Activated CD4-positive, alpha-beta memory T cell treated with anti-CD3 and anti-CD28 coated beads for 36 hours (primary cell): ENCODE measurements at regions of chr5 and their contacts with region 1.

Region 1: DNA sequence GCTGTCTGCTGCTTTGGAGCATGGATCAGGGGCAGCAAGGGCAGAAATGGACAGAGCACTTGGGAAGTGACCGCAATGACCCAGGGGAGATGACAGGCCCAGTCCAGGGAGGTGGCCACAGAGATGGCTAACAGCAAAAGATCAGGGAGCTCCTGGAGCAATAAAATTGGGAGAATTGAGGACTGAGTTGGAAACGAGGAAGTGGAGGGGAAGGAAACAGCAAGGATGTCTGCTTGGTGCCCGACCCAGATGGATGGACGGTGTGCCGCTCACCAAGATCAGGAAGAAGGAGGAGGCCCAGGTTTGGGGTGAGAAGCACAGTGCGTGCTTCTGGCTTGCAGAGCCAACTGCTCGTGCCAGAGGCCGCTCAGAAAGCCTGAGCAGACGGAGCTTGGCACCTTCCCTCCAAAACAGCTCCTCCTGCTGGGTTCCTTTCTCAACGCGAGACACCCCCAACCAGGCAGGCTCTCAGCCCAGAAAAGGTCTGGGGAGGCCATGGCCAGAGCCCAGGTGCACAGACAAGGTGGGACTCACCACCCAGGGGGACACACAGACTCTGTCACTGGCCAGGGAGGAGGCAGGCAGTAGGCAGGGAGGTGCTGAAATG is 1.7 kb upstream of the SLC34A1 start:
- DNase-seq: peak; percentile 41
- H3K4me3 Mint-ChIP-seq: no peak overlapping the region
- H3K27ac Mint-ChIP-seq: no peak overlapping the region
- H3K4me1 Mint-ChIP-seq: peaks cover 23% of the 10 kb centered on the region
- H3K27me3 Mint-ChIP-seq: no peaks in the 10 kb centered on the region

Region 2: DNA sequence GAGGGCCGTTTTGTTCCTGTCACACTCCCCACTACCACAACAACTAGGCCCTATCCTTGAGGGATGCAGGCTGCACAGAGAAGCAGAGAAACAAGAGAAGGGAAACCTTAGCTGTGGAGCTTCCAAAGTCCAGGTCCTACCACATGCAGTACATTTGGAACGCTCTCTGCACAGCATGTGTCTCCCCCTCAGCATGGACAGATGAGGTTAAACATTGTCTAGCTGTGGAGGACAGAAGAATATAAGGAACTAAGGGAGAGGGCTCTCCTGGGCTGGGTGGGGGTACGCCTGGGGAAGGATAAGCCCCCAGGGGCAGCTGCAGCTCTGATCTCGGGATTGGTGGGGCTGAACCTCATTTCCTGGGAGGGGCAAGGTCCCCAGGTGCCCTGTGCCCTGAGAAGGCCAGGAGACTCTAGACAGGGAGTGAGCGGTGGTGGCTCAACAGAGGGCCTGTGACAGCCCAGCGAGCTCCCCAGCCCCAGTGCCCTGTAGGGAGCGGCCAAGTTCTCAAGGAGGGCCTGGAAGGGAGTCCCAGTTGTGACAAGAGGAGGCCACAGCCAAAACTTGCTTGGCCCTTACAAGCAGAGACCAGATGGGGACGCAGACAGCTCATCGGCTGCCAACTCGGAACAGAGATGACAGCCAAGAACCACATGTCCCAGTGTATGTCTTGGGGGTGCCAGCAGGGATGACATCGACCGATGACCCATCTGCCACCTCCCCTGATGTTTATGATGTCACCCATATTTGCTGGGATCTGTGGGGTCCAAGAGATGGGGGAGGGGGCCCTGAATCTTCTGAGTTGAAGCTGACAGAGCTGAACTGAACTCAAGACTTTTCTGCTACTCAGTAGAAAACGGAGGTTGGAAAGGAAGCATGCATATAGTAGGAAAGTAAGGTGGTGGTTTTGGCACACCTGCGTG is 705.1 kb before region 1 on chr5:
- CTCF ChIA-PET with region 1: no interaction called
- POLR2A ChIA-PET with region 1: no interaction called
- intact Hi-C with region 1: no loop called
- DNase-seq: no peak
- H3K4me3 Mint-ChIP-seq: no peak overlapping the region
- H3K27ac Mint-ChIP-seq: no peak overlapping the region
- H3K4me1 Mint-ChIP-seq: no peaks in the 10 kb centered on the region
- H3K27me3 Mint-ChIP-seq: peaks cover 35% of the 10 kb centered on the region

Region 3: DNA sequence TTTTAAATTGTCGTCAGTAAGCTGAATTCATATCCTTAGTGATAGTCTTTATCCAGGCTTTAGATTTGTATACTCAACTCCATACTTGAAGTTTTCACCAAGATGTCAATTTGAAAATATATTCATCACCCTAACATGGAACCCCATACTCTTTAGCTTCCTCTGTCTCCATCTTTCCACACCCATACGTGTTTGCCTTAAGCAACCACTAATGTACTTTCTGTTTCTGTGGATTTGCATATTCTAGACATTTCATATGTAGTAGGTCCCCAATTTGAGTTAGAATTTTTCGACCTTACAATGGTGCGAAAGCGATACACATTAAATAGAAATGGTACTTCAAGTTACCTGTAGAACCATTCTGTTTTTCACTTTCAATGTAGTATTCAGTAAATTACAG is 183.8 kb before region 1 on chr5:
- CTCF ChIA-PET with region 1: no interaction called
- POLR2A ChIA-PET with region 1: no interaction called
- intact Hi-C with region 1: no loop called
- DNase-seq: no peak
- H3K4me3 Mint-ChIP-seq: no peak overlapping the region
- H3K27ac Mint-ChIP-seq: no peak overlapping the region
- H3K4me1 Mint-ChIP-seq: peaks cover 17% of the 10 kb centered on the region
- H3K27me3 Mint-ChIP-seq: no peaks in the 10 kb centered on the region

Region 4: GRCh38 chr5:177362610-177363507 is 19.7 kb before region 1 on chr5:
- CTCF ChIA-PET with region 1: interaction called, 3 read pairs
- POLR2A ChIA-PET with region 1: interaction called, 11 read pairs
- intact Hi-C with region 1: loop called (anchors 1 kb)
- DNase-seq: peak; percentile 82
- H3K4me3 Mint-ChIP-seq: peak overlapping the region; percentile 69
- H3K27ac Mint-ChIP-seq: peak overlapping the region; percentile 51
- H3K4me1 Mint-ChIP-seq: peaks cover 73% of the 10 kb centered on the region
- H3K27me3 Mint-ChIP-seq: no peaks in the 10 kb centered on the region

Region 5: DNA sequence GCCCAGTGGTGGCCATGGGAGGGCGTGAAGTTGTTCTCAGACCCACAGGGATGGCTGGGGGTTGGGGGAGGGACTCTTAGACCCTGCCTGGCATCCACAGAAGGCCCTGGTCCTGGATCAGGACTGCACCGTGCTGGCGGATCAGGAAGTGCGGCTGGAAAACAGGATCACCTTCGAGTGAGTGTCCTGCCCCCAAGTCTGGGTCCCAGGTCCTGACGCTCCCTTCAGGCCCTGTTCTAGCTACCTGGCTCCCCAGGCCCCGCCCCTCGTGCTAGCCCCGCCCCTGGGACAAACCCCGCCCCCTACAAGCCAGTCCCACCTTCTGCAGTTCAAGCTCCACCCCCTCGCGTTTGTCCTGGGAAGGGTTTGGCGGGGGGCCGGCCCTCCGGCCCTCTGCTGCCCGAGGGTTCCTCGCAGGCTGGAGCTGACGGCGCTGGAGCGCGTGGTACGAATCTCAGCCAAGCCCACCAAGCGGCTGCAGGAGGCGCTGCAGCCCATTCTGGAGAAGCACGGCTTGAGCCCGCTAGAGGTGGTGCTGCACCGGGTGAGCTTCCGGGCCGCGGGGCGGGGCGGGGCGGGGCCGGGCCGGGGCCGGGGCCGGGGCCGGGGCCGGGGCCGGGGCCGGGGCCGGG is 11.9 kb before region 1 on chr5:
- CTCF ChIA-PET with region 1: interaction called, 35 read pairs
- POLR2A ChIA-PET with region 1: interaction called, 4 read pairs
- intact Hi-C with region 1: no loop called
- DNase-seq: peak; percentile 79
- H3K4me3 Mint-ChIP-seq: peak overlapping the region; percentile 74
- H3K27ac Mint-ChIP-seq: peak overlapping the region; percentile 38
- H3K4me1 Mint-ChIP-seq: peaks cover 65% of the 10 kb centered on the region
- H3K27me3 Mint-ChIP-seq: no peaks in the 10 kb centered on the region